ENCODE measurements at regions of chr17 and their contacts with region 1.

Region 1: DNA sequence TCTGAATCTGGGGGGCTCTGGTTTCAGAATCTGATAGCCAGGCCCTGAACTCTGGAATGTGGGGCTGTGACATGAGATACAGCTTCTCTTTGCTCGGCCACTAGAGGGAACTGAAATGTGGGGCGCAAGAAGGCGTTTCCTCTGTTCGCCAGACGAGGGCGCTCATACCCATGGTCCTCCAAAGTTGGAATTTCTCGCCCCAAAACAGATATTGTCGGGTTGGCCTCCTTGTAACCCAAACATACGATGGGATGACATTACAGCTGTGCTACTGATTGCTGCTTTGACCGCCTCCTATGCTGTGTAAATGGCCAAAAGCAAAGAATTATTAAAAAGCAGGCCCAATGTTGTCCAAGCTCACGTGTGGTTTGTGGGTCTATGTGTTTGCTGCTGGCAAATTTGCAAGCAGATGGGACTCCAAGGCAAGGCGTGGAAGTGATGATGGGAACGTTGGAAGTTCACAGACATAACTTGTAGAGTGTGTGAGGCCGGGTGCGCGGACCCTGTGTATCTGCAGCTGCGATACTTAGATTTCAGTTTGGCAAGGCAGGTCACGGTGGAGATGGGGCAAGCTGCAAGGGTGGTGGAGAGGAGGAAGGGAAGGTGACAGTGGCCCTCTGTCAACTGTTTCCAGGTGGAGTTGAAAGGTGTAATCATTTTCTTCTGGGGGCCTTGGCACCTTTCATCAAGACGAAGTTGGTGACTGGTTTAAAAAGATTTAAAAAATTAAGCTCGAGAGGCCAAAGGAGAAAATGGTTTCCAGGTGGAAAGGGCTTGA is 13.0 kb upstream of the MSI2 start:
- H3K4me3 ChIP-seq: no peak overlapping the region
- H3K27ac ChIP-seq: no peak overlapping the region
- H3K4me1 ChIP-seq: no peaks in the 10 kb centered on the region
- CTCF ChIP-seq: peak; percentile 91

Region 2: GRCh38 chr17:56913864-56914640 is 329.3 kb before region 1 on chr17 and contains the start of gene TRIM25:
- CTCF ChIA-PET with region 1: no interaction called
- POLR2A ChIA-PET with region 1: no interaction called
- H3K4me3 ChIP-seq: peak within 1 kb of the TSS; percentile 92
- H3K27ac ChIP-seq: peak within 1 kb of the TSS; percentile 75
- H3K4me1 ChIP-seq: peaks cover 4% of the 10 kb centered on the region
- CTCF ChIP-seq: no peak

Region 3: DNA sequence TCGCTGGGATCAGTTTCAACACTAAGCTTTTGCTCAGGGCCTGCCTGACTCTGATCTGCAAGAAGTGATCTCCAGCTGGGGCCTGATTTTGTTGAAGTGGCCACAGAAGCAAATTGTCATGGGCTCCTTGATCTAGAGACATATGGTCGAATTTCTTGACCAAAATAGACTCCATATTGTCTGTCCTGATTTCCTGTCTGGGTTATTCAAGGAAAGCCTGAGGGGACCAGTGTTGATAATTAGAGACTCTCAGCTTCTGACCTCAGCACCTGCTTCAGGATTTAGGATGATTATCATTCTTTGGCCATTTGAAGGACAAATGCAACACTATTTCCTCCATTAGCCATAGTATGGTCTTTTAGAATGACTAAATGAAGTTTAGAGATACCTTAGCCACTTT is 35.9 kb before region 1 on chr17:
- CTCF ChIA-PET with region 1: interaction called, 22 read pairs
- POLR2A ChIA-PET with region 1: no interaction called
- H3K4me3 ChIP-seq: no peak overlapping the region
- H3K27ac ChIP-seq: no peak overlapping the region
- H3K4me1 ChIP-seq: no peaks in the 10 kb centered on the region
- CTCF ChIP-seq: no peak

Region 4: GRCh38 chr17:57261084-57261461 is 17.7 kb after region 1 on chr17:
- CTCF ChIA-PET with region 1: interaction called, 20 read pairs
- POLR2A ChIA-PET with region 1: interaction called, 4 read pairs
- H3K4me3 ChIP-seq: no peak overlapping the region
- H3K27ac ChIP-seq: no peak overlapping the region
- H3K4me1 ChIP-seq: peaks cover 11% of the 10 kb centered on the region; the same call in 1 of the 2 replicates
- CTCF ChIP-seq: no peak

Region 5: DNA sequence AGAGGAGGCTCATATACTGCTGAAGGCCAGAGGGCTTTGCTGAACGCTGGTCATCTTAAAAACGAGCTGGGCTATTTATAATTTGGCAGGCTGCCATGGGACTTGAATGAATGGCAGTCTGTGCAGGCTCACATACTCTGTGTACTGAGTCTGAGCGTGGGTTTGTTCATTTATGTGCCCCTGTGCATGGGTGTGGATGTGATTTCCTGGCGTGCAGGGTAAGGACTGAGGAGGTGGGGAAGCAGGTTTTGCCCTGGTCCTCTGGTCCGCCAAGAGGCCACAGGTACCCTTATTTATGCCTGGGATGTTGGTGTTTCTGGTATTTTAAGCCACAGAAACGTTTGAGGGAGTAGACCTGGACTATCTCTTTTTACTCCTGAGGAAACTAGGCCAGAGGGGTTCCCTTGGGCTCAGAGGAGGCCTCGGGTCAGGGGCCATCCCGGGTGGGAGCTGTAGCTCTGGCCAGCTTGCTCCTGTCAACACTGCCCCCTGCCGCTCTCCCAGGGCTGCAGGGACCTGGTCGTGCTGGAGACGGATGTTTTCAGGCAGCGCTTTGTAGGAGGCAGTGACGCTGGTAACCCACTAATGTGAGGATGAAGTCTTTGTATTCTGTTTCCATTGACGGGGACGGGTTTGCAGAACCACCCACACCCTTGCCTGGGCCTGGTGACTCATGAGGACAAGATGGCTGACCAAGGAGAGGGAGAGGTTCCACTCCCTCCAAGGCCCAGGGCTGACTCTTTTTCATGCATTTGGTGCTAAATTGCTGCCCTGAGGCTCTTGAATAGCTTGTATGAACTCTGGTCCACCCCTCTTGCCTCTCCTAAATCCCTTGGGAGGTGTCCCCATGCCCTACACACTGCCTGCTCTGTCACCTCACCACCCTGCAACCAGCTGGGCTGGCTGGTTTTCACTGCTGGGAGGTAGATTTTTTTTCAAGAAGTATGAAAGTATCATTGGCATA is 197.4 kb after region 1 on chr17:
- CTCF ChIA-PET with region 1: interaction called, 11 read pairs
- POLR2A ChIA-PET with region 1: no interaction called
- H3K4me3 ChIP-seq: no peak overlapping the region
- H3K27ac ChIP-seq: peak overlapping the region; percentile 26; the same call in 1 of the 2 replicates
- H3K4me1 ChIP-seq: peaks cover 23% of the 10 kb centered on the region
- CTCF ChIP-seq: peak; percentile 39; the same call in 1 of the 2 replicates

Region 6: GRCh38 chr17:57463103-57463851 is 219.9 kb after region 1 on chr17:
- CTCF ChIA-PET with region 1: no interaction called
- POLR2A ChIA-PET with region 1: no interaction called
- H3K4me3 ChIP-seq: no peak overlapping the region
- H3K27ac ChIP-seq: no peak overlapping the region
- H3K4me1 ChIP-seq: no peaks in the 10 kb centered on the region
- CTCF ChIP-seq: no peak

Region 7: DNA sequence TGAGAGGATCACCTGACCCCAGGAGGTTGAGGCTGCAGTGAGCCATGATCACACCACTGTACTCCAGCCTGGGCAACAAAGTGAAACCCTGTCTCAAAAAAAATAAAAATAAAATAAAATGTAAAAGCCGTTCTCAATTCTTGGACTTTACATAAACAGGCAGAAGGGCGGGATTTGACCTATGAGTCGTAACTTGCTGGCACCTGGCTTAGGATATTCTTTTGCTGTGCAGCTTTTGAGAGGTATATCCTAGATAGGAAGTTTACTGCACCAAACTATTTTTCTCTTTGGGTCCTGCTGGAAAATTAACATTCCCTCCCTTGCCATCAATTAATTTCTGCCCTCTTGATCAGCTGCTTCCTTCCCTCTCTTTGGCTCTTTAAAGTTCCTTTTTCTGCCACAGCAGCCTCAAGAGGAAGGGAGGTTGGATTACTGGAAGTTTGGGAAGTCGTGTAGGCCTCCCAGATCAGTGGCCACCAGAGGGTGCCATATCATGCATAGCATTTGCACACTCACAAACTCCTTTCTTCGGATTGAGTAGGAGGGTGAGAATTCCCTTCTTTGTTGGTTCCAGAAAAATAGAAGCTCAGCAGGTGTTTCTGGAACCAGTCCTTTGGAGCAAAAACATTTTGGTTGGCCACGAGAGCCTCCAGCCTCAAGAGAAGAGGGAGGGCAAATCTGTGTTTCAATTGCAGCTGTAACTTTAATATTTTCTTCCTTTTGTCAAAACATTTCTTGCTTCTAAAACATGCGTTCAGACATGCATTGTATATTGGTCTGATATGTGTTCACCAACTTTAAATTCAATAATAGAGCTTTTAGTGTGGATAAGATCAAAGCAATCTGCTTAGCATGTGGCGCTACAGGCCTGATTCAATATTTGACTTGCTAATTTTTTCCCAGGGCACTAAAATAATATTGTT is 354.4 kb after region 1 on chr17:
- CTCF ChIA-PET with region 1: interaction called, 26 read pairs
- POLR2A ChIA-PET with region 1: no interaction called
- H3K4me3 ChIP-seq: no peak overlapping the region
- H3K27ac ChIP-seq: no peak overlapping the region
- H3K4me1 ChIP-seq: 0 out of 2 replicates have a peak, but pooled peaks cover 5% of the 10 kb centered on the region
- CTCF ChIP-seq: peak; percentile 75

Region 8: GRCh38 chr17:57783106-57783742 is 539.9 kb after region 1 on chr17:
- CTCF ChIA-PET with region 1: interaction called, 35 read pairs
- POLR2A ChIA-PET with region 1: no interaction called
- H3K4me3 ChIP-seq: no peak overlapping the region
- H3K27ac ChIP-seq: no peak overlapping the region; the same call in 1 of the 2 replicates
- H3K4me1 ChIP-seq: peaks cover 3% of the 10 kb centered on the region; the same call in 1 of the 2 replicates
- CTCF ChIP-seq: peak; percentile 94

Measured in HEK293 (cell line).